ENCODE measurements at regions of chr13 and their contacts with region 1.

Region 1: DNA sequence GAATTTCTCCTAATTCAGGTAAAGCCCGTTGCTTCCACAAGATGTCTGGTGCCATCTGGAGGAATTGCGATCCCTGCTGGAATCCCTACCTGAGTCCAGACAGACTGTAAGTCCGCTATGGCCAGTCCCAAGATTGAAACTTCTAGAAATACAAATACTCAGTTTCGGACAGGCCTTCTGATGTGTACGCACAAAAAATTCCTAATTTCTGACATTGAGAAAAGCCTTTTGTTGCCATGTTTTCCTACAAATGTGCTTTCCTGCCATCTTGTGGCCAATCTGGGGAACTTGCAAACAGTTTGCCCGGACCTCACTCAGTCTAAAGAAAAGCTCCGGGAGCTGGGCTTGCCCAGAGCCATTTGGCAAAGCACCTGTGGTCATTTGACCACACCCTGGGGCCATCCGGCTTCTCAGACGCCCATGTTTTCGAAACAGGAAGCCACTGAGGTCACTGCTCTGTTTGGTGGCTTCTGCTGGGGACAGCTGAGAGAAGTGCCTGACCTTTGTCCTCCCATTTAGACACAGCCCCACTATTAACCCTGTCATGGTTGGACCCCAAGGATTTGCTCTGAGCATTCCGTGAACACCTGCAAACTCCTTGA is 79.4 kb downstream of the SLC15A1 start:
- DNase-seq: peak; percentile 82 to 90
- H3K4me3 ChIP-seq: no peak overlapping the region
- H3K27ac ChIP-seq: no peak overlapping the region
- H3K4me1 ChIP-seq: peaks cover 14% of the 10 kb centered on the region
- H3K27me3 ChIP-seq: no peaks in the 10 kb centered on the region
- CTCF ChIP-seq: peak; percentile 95

Region 2: GRCh38 chr13:97855570-97856303 is 817.3 kb before region 1 on chr13:
- CTCF ChIA-PET with region 1: no interaction called
- POLR2A ChIA-PET with region 1: no interaction called
- intact Hi-C with region 1: loop called (anchors 1 kb)
- DNase-seq: peak; percentile 27 to 54
- H3K4me3 ChIP-seq: no peak overlapping the region
- H3K27ac ChIP-seq: no peak overlapping the region
- H3K4me1 ChIP-seq: peaks cover 9% of the 10 kb centered on the region; the same call in 1 of the 2 replicates
- H3K27me3 ChIP-seq: no peaks in the 10 kb centered on the region
- CTCF ChIP-seq: peak; percentile 94

Region 3: GRCh38 chr13:98445340-98446233 is 227.5 kb before region 1 on chr13:
- CTCF ChIA-PET with region 1: interaction called, 10 read pairs
- POLR2A ChIA-PET with region 1: interaction called, 3 read pairs
- intact Hi-C with region 1: loop called (anchors 1 kb)
- DNase-seq: peak; percentile 76 to 77
- H3K4me3 ChIP-seq: no peak overlapping the region
- H3K27ac ChIP-seq: no peak overlapping the region; the same call in 1 of the 2 replicates
- H3K4me1 ChIP-seq: peaks cover 4% of the 10 kb centered on the region; the same call in 1 of the 2 replicates
- H3K27me3 ChIP-seq: no peaks in the 10 kb centered on the region
- CTCF ChIP-seq: peak; percentile 96

Region 4: DNA sequence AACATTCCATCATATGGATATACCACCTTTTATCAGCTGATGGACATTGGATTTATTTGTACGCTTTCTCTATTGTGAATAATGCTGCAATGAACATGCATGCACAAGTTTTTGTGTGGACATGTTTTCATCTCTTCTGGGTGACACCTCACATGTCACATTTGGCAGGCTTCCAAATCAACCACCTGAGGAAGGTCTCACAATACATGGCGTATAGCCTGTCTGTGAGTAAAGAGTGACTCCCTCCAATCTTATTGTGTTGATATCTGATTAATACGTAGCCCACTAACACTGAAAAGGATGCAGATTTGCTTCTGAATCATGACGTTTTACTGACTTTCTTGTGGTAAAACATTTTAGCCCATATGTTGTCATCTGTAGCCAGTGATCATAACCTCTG is 18.3 kb after region 1 on chr13:
- CTCF ChIA-PET with region 1: interaction called, 10 read pairs
- POLR2A ChIA-PET with region 1: no interaction called
- intact Hi-C with region 1: no loop called
- DNase-seq: no peak
- H3K4me3 ChIP-seq: no peak overlapping the region
- H3K27ac ChIP-seq: no peak overlapping the region
- H3K4me1 ChIP-seq: no peaks in the 10 kb centered on the region
- H3K27me3 ChIP-seq: no peaks in the 10 kb centered on the region
- CTCF ChIP-seq: no peak

Region 5: DNA sequence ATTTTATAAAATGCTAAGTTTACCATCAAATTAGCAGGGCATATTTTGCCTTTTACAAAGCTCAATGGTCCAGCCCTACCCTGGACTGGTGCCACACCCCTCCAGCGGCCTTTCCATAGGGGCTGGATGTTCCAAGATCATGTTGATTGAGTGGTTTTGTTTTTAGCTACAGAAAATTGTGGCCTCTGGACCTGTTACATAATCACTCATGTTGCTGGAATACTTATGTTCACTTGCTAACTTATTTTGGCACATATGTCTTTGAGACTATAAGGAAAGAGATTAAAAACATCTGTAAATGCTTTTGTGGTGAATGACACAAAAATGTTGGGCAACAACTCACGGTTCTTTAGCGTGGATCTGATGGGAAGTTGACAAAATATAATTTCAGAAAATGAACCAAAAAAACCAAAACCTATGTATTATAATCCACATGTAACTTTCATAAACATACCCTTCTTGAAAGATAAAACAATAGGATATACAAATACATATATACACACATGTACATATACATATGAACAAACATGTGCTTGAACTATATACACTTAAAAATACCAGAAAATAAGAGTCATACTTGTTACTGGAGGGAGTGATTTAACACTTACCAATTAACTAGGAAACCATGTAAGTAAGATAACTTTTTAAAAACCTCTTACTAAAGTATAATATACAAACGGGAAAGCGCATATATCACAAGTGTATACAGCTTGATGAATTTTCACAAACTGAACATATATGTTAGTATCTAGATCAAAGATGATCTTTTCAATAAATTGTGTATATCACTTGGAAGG is 126.0 kb after region 1 on chr13:
- CTCF ChIA-PET with region 1: no interaction called
- POLR2A ChIA-PET with region 1: no interaction called
- intact Hi-C with region 1: no loop called
- DNase-seq: no peak
- H3K4me3 ChIP-seq: no peak overlapping the region
- H3K27ac ChIP-seq: no peak overlapping the region
- H3K4me1 ChIP-seq: no peaks in the 10 kb centered on the region
- H3K27me3 ChIP-seq: no peaks in the 10 kb centered on the region
- CTCF ChIP-seq: no peak

Region 6: DNA sequence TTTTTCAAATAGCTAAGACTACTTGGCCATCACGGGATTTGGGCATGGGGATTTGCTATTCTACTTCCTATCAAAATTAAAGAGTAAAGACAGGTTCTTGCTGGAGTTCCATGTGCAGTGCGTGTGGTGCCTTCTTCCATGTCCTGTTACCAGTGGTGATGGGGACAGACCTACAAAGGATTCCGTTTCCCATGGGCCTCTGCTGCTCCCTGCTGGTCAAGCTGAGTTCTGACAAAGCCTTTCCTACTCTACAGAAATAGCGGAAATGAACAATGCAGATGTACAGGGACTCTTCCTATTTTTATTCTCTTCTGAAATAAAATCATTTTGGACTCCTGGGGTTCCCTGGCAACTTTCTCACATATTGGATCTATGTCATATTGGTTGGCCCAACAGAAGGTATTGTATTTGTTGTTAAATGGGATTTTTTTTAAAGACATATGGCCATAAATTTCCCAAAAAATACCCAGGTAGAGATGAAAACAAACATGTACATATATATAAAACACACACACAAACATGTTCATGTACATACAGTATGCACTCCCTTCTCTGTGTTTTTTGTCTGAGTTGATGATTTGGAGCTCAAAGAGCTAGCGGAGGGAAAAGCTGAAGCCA is 169.9 kb after region 1 on chr13:
- CTCF ChIA-PET with region 1: no interaction called
- POLR2A ChIA-PET with region 1: no interaction called
- intact Hi-C with region 1: loop called (anchors 2 kb)
- DNase-seq: peak; percentile 59 to 62
- H3K4me3 ChIP-seq: no peak overlapping the region
- H3K27ac ChIP-seq: no peak overlapping the region
- H3K4me1 ChIP-seq: no peaks in the 10 kb centered on the region
- H3K27me3 ChIP-seq: no peaks in the 10 kb centered on the region
- CTCF ChIP-seq: peak; percentile 93

Measured in PC-9 (cell line).